Left ventricle myocardium inferior (tissue), 1 donor: ENCODE measurements at regions of chr9 and their contacts with region 1.

Region 1: DNA sequence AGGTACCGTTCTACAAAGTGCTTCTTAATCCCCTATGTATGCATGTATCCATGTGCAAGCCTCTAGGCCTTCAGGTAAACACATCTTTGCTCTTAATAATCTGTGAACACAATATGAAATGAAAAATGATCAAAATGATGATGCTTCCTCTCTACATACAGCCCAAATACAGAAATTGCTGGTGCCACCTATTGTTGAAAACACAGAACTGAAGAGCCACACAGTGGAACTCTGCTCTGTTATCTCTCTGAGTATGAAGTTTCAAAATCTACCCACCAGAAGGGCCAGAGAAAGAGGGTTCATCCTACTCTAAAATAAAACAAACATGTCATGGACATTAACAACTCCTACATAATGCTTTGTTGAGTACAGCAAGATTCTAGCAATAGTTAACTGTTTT is 71.3 kb downstream of the GLIS3 start:
- DNase-seq: no peak
- H3K4me3 ChIP-seq: no peak overlapping the region
- H3K27ac ChIP-seq: no peak overlapping the region
- H3K4me1 ChIP-seq: peaks cover 3% of the 10 kb centered on the region
- H3K27me3 ChIP-seq: no peaks in the 10 kb centered on the region
- CTCF ChIP-seq: peak; percentile 73

Region 2: GRCh38 chr9:3732077-3733038 is 496.2 kb before region 1 on chr9:
- intact Hi-C with region 1: loop called (anchors 5 kb)
- DNase-seq: no peak
- H3K4me3 ChIP-seq: no peak overlapping the region
- H3K27ac ChIP-seq: peak overlapping the region; percentile 37
- H3K4me1 ChIP-seq: peaks cover 13% of the 10 kb centered on the region
- H3K27me3 ChIP-seq: no peaks in the 10 kb centered on the region
- CTCF ChIP-seq: peak; percentile 79

Region 3: GRCh38 chr9:3992924-3993323 is 235.7 kb before region 1 on chr9:
- intact Hi-C with region 1: no loop called
- DNase-seq: no peak
- H3K4me3 ChIP-seq: no peak overlapping the region
- H3K27ac ChIP-seq: no peak overlapping the region
- H3K4me1 ChIP-seq: no peaks in the 10 kb centered on the region
- H3K27me3 ChIP-seq: no peaks in the 10 kb centered on the region
- CTCF ChIP-seq: no peak